GM13976 (cell line): ENCODE measurements at regions of chr1 and their contacts with region 1.

Region 1: GRCh38 chr1:113982033-113982931 is 3.0 kb downstream of the OLFML3 start:
- DNase-seq: no peak
- CTCF ChIP-seq: no peak

Region 2: GRCh38 chr1:114274621-114275317 is 292.5 kb after region 1 on chr1:
- in situ Hi-C with region 1: loop called (anchors 10 kb)
- DNase-seq: no peak
- CTCF ChIP-seq: no peak